ENCODE measurements at regions of chr4 and their contacts with region 1.

Region 1: DNA sequence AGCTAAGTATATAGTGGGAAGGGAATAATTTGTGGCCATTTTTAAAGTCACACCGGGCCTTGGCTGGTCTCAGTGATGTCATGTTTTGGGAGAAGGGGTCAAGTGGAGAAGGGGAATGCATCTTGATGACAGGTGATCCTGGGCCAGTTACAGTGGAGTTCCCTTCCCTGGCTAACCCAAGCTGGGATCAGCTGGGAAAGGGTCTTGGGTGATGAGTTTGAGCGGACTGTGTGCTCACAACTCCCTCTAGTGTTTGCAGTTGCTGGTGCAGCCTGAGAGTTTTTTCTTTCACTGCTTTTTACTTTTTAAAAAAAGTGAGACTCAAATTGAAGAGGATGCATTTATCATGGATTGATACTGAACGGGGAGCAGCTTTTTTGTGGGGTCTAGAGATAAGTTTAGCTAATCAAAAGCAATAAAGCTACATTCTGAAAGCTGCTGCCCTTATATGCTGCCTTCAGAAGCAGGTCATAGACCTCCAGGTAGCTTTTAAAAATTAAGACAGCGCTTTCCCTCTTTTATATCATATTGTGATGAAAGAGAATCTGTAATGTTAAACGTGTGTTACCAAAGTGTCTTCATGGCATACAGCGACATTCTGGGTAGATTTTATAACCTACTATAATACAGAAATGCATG is 164.7 kb downstream of the DCLK2 start:
- DNase-seq: peak; percentile 12
- ATAC-seq: peak; percentile 67
- H3K4me3 ChIP-seq: no peak overlapping the region
- H3K27ac ChIP-seq: no peak overlapping the region
- H3K4me1 ChIP-seq: no peaks in the 10 kb centered on the region; a peak in 1 of 4 replicates
- H3K27me3 ChIP-seq: no peaks in the 10 kb centered on the region
- CTCF ChIP-seq: peak; percentile 77 to 91 (median 85)
- POLR2A ChIP-seq: no peak
- RAD21 ChIP-seq: peak; percentile 90

Region 2: GRCh38 chr4:149914119-149915115 is 328.5 kb before region 1 on chr4:
- CTCF ChIA-PET with region 1: no interaction called
- POLR2A ChIA-PET with region 1: no interaction called
- RAD21 ChIA-PET with region 1: no interaction called
- intact Hi-C with region 1: loop called (anchors 2 kb)
- DNase-seq: peak; percentile 52
- ATAC-seq: peak; percentile 90
- H3K4me3 ChIP-seq: no peak overlapping the region
- H3K27ac ChIP-seq: no peak overlapping the region
- H3K4me1 ChIP-seq: no peaks in the 10 kb centered on the region
- H3K27me3 ChIP-seq: no peaks in the 10 kb centered on the region
- CTCF ChIP-seq: peak; percentile 55 to 88 (median 81); a peak in 5 of 6 replicates
- POLR2A ChIP-seq: no peak
- RAD21 ChIP-seq: peak; percentile 65

Region 3: GRCh38 chr4:149980941-149981340 is 262.0 kb before region 1 on chr4:
- CTCF ChIA-PET with region 1: no interaction called
- POLR2A ChIA-PET with region 1: no interaction called
- RAD21 ChIA-PET with region 1: no interaction called
- intact Hi-C with region 1: loop called (anchors 1 kb)
- DNase-seq: peak; percentile 33
- ATAC-seq: peak; percentile 88
- H3K4me3 ChIP-seq: no peak overlapping the region
- H3K27ac ChIP-seq: no peak overlapping the region
- H3K4me1 ChIP-seq: no peaks in the 10 kb centered on the region
- H3K27me3 ChIP-seq: no peaks in the 10 kb centered on the region
- CTCF ChIP-seq: peak; percentile 42 to 81 (median 70); a peak in 4 of 6 replicates
- POLR2A ChIP-seq: no peak
- RAD21 ChIP-seq: peak; percentile 69

Region 4: GRCh38 chr4:149999485-150000074 is 243.4 kb before region 1 on chr4:
- CTCF ChIA-PET with region 1: interaction called, 4 read pairs
- POLR2A ChIA-PET with region 1: no interaction called
- RAD21 ChIA-PET with region 1: no interaction called
- intact Hi-C with region 1: loop called (anchors 2 kb)
- DNase-seq: peak; percentile 60
- ATAC-seq: peak; percentile 74
- H3K4me3 ChIP-seq: no peak overlapping the region
- H3K27ac ChIP-seq: no peak overlapping the region
- H3K4me1 ChIP-seq: peaks cover 0 to 31% of the 10 kb centered on the region in 2 experiments; a peak in 2 of 4 replicates
- H3K27me3 ChIP-seq: no peaks in the 10 kb centered on the region
- CTCF ChIP-seq: peak; percentile 65 to 77 (median 76)
- POLR2A ChIP-seq: no peak
- RAD21 ChIP-seq: peak; percentile 91

Region 5: GRCh38 chr4:150010525-150011126 is 232.3 kb before region 1 on chr4:
- CTCF ChIA-PET with region 1: interaction called, 14 read pairs
- POLR2A ChIA-PET with region 1: no interaction called
- RAD21 ChIA-PET with region 1: no interaction called
- intact Hi-C with region 1: loop called (anchors 2 kb)
- DNase-seq: peak; percentile 63
- ATAC-seq: peak; percentile 91
- H3K4me3 ChIP-seq: no peak overlapping the region
- H3K27ac ChIP-seq: no peak overlapping the region
- H3K4me1 ChIP-seq: peaks cover 0 to 8% of the 10 kb centered on the region in 2 experiments; a peak in 2 of 4 replicates
- H3K27me3 ChIP-seq: no peaks in the 10 kb centered on the region
- CTCF ChIP-seq: peak; percentile 59 to 74 (median 64); a peak in 5 of 6 replicates
- POLR2A ChIP-seq: no peak
- RAD21 ChIP-seq: peak; percentile 79

Region 6: DNA sequence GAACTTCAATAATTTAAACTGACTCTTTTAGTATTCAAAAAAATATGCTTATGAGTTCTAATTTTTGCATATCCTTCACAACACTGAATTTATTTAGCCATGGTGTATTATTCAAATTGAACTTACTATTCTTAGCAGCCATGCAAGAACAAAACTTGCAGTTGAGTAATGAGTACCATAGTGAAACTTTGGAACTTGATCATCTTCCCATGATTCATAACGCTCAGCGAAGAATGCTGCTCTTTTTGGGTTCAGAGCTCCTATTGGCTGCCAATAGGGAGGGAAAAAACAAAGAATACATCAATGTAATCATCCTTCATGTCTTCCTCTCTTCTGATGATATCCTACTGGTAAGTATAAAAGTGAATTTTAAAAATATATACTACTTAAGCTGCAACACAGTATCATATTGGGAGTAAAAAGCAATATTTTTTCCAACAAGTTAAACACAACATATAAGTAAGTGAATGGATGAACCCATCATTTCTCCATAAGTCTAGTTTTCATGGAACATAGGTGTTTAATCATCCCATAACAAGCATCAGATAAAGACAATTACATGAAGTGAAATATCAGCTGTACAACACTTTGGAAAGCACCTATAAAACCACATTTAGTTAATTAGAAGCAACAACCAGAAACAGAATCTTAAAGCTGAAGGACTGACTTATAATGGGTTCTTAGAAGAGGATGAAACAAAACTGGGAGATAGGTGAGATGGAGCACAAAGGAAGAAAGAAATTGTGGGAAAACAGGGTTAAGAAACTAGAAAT is 193.8 kb after region 1 on chr4:
- CTCF ChIA-PET with region 1: no interaction called
- POLR2A ChIA-PET with region 1: no interaction called
- RAD21 ChIA-PET with region 1: no interaction called
- intact Hi-C with region 1: no loop called
- DNase-seq: no peak
- ATAC-seq: no peak
- H3K4me3 ChIP-seq: no peak overlapping the region
- H3K27ac ChIP-seq: no peak overlapping the region
- H3K4me1 ChIP-seq: no peaks in the 10 kb centered on the region
- H3K27me3 ChIP-seq: no peaks in the 10 kb centered on the region
- CTCF ChIP-seq: no peak
- POLR2A ChIP-seq: no peak
- RAD21 ChIP-seq: no peak

Region 7: DNA sequence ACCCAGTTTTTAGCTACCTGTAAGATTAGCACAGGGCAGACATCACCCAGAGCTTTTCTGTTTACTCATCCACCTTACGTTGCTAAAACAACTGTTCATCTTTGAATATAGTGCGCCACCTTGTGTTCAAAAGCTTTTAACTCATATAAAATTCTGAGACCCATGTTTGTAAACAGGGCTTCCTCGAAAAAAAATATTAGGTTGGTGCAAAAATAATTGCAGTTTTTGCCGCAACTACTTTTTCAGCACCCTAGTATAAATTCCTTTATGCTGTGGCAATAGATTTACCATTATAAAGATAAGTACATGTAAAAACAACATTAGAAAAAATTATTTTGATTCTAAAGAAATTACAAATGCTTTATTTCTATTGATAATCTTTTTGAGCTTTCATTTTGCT is 624.2 kb after region 1 on chr4:
- CTCF ChIA-PET with region 1: interaction called, 10 read pairs
- POLR2A ChIA-PET with region 1: no interaction called
- RAD21 ChIA-PET with region 1: no interaction called
- intact Hi-C with region 1: no loop called
- DNase-seq: peak; percentile 73
- ATAC-seq: peak; percentile 79
- H3K4me3 ChIP-seq: no peak overlapping the region
- H3K27ac ChIP-seq: no peak overlapping the region
- H3K4me1 ChIP-seq: no peaks in the 10 kb centered on the region
- H3K27me3 ChIP-seq: no peaks in the 10 kb centered on the region
- CTCF ChIP-seq: peak; percentile 30 to 66 (median 64); a peak in 4 of 6 replicates
- POLR2A ChIP-seq: no peak
- RAD21 ChIP-seq: peak; percentile 81

Measured in HCT116 (cell line).